OCI-LY7 (cell line): ENCODE measurements at regions of chr4 and their contacts with region 1.

Region 1: GRCh38 chr4:48016141-48017103 is at the starts of genes CNGA1 and NIPAL1:
- DNase-seq: peak; percentile 77
- H3K4me3 ChIP-seq: peak within 1 kb of the TSS; percentile 73
- H3K27ac ChIP-seq: no peak within 1 kb of the TSS
- H3K4me1 ChIP-seq: peaks cover 9% of the 10 kb centered on the region
- CTCF ChIP-seq: peak; percentile 81
- total RNA-seq, gene CNGA1: not detected in 2 replicates
- total RNA-seq, gene NIPAL1: 0.28 and 1.1 TPM in 2 replicates

Region 2: GRCh38 chr4:47926639-47927258 is 89.7 kb before region 1 on chr4:
- CTCF ChIA-PET with region 1: no interaction called
- POLR2A ChIA-PET with region 1: interaction called, 3 read pairs
- intact Hi-C with region 1: loop called (anchors 5 kb)
- DNase-seq: peak; percentile 65
- H3K4me3 ChIP-seq: peak overlapping the region; percentile 31
- H3K27ac ChIP-seq: no peak overlapping the region
- H3K4me1 ChIP-seq: peaks cover 21% of the 10 kb centered on the region
- CTCF ChIP-seq: peak; percentile 90

Region 3: GRCh38 chr4:48027653-48028052 is 11.2 kb after region 1 on chr4:
- CTCF ChIA-PET with region 1: interaction called, 3 read pairs
- POLR2A ChIA-PET with region 1: interaction called, 14 read pairs
- intact Hi-C with region 1: no loop called
- DNase-seq: no peak
- H3K4me3 ChIP-seq: no peak overlapping the region
- H3K27ac ChIP-seq: no peak overlapping the region
- H3K4me1 ChIP-seq: peaks cover 16% of the 10 kb centered on the region
- CTCF ChIP-seq: no peak